HEK293 (cell line): ENCODE measurements at regions of chr2 and their contacts with region 1.

Region 1: GRCh38 chr2:219010162-219010756 is 17.0 kb upstream of the CRYBA2 start:
- H3K4me3 ChIP-seq: no peak overlapping the region
- H3K27ac ChIP-seq: no peak overlapping the region
- H3K4me1 ChIP-seq: no peaks in the 10 kb centered on the region
- CTCF ChIP-seq: peak; percentile 79

Region 2: GRCh38 chr2:218568190-218569037 is 441.8 kb before region 1 on chr2 and contains the starts of genes CNOT9 and USP37:
- CTCF ChIA-PET with region 1: no interaction called
- POLR2A ChIA-PET with region 1: no interaction called
- H3K4me3 ChIP-seq: peak within 1 kb of the TSS; percentile 83
- H3K27ac ChIP-seq: peak within 1 kb of the TSS; percentile 83
- H3K4me1 ChIP-seq: peaks cover 6% of the 10 kb centered on the region
- CTCF ChIP-seq: peak; percentile 41; the same call in 1 of the 2 replicates

Region 3: GRCh38 chr2:218820746-218821369 is 189.4 kb before region 1 on chr2:
- CTCF ChIA-PET with region 1: no interaction called
- POLR2A ChIA-PET with region 1: no interaction called
- H3K4me3 ChIP-seq: no peak overlapping the region
- H3K27ac ChIP-seq: no peak overlapping the region
- H3K4me1 ChIP-seq: no peaks in the 10 kb centered on the region
- CTCF ChIP-seq: no peak

Region 4: DNA sequence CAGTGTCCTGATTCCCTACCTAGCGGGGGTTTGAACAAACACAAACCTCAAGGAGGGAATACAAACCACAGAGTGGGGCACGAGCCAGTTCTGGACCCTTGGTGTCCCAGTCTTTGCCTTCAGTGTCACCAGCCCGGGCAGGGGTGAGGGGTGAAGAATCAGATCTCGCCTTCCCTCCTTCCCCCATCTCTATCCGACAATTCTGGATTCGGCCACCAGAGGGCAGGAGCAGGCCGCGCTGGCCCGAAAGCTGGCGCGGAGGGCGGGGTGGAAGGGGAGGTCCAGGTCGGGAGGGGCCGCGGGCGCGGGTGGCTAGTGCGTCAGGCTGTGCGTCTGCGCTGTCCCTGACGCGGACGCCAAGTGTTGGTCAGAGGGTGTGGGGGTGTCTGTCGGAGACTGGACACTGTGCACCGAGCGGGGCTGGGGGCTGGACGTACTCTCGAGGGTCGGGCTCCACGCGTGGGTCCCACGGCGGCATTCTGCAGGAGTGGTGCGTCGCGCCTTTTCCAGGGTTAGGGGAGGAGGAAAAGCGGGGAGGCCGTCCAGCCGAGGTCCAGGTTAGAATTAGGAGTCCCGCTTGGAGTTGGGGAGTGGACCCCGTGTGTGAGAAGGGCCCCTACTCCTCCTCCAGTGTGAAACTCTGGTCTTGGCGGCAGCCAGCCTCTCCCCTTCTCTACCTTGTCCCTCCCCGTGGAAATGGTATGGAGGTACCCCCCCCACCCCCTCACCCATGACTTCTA is 14.1 kb before region 1 on chr2:
- CTCF ChIA-PET with region 1: interaction called, 14 read pairs
- POLR2A ChIA-PET with region 1: no interaction called
- H3K4me3 ChIP-seq: peak overlapping the region; percentile 27
- H3K27ac ChIP-seq: no peak overlapping the region
- H3K4me1 ChIP-seq: no peaks in the 10 kb centered on the region
- CTCF ChIP-seq: peak; percentile 94